ENCODE measurements at regions of chr22 and their contacts with region 1.

Region 1: DNA sequence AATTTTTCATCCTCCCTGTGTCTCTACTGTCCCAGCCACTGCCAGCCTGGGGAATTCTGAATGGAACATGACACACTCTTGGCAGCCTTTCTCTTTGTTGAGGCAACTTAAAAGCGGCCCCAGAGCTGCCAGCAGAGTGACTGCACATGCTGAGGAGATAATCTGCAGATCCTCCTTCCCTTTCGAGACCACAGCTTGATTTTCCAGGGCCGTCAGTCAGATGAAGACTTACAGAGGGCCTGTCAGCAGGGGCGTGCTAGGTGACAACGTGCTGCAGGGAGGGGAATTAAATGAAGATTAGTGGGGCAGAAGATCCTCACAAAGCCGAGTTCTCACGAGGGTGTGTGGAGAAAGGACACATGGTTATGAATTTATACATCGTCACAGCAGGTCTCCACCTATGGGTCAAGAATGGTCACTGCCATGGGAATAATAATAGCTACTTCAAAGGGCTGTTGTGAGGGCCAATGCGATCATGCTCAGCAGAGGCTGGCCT is 193.5 kb upstream of the PITPNB start:
- DNase-seq: peak; percentile 48 to 51
- ATAC-seq: peak; percentile 49 to 88 (median 74)
- H3K4me3 ChIP-seq: peak overlapping the region in 1 of 10 donors; percentile 3
- H3K27ac ChIP-seq: peak overlapping the region in 9 of 10 donors; percentile 16 to 68 (median 48)
- H3K4me1 ChIP-seq: peaks cover 0 to 34% (median 26%) of the 10 kb centered on the region in 9 donors
- H3K27me3 ChIP-seq: no peaks in the 10 kb centered on the region
- CTCF ChIP-seq: peak; percentile 6 to 57 (median 47)

Region 2: DNA sequence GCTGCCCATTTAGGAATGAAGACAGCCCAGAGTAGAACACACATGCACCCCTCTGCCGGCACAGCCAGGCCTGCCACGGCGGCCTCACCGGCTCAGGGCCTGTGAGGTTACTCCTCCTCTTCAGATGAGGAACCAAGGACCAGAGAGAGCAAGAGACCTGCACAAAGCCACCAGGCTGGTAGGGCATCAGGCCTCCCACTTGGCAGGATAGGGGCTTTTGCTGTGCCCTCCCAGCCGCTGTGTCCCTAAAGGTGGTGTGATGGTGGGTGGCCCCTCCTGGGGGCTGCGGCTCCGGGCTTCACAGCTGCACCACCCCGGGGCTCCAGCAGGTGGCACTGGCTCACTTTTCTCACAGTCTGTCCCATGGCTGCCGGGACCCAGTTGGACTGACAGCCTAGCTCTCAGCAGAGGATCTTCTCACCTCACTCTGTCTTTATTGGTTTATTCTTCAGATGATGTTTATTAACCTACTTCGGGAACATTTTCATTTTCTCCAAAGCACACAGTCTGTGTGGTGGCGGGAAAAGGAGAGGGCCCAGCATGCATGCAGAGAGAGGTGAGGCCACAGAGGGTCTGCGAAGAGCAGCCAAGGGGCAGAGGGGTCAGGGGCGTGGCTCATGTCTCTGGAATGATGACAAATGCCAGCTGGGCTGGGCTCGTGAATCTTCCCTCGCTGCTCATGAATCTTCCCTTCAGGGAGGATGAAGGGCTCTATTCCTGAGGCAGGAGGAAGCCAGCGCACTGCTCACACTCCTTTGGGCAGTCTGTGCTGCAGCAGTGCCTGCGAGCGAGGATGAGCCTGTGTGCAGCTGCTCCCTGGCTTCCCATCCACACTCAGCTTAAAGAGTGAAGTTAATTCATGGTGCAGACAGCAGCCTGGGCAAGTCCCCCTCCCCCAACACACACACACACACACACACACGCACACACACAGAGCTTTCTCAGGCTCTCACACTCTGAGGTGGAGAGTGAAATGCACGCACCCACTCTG is 92.4 kb before region 1 on chr22:
- intact Hi-C with region 1: loop called in 1 of 10 experiments (anchors 10 kb)
- DNase-seq: peak; percentile 74 to 78
- ATAC-seq: peak; percentile 69 to 83 (median 74)
- H3K4me3 ChIP-seq: no peak overlapping the region
- H3K27ac ChIP-seq: peak overlapping the region in 1 of 10 donors; percentile 1
- H3K4me1 ChIP-seq: peaks cover 6 to 58% (median 23%) of the 10 kb centered on the region in 9 donors
- H3K27me3 ChIP-seq: no peaks in the 10 kb centered on the region
- CTCF ChIP-seq: peak; percentile 85 to 98 (median 96)

Region 3: GRCh38 chr22:28051787-28052356 is 60.7 kb before region 1 on chr22:
- intact Hi-C with region 1: loop called in 1 of 10 experiments (anchors 2 kb)
- DNase-seq: peak; percentile 72 to 81
- ATAC-seq: peak in 7 of 8 donors; percentile 50 to 73 (median 71)
- H3K4me3 ChIP-seq: no peak overlapping the region
- H3K27ac ChIP-seq: no peak overlapping the region
- H3K4me1 ChIP-seq: peaks cover 0 to 31% (median 7%) of the 10 kb centered on the region in 9 donors
- H3K27me3 ChIP-seq: no peaks in the 10 kb centered on the region
- CTCF ChIP-seq: peak; percentile 77 to 95 (median 87)

Region 4: DNA sequence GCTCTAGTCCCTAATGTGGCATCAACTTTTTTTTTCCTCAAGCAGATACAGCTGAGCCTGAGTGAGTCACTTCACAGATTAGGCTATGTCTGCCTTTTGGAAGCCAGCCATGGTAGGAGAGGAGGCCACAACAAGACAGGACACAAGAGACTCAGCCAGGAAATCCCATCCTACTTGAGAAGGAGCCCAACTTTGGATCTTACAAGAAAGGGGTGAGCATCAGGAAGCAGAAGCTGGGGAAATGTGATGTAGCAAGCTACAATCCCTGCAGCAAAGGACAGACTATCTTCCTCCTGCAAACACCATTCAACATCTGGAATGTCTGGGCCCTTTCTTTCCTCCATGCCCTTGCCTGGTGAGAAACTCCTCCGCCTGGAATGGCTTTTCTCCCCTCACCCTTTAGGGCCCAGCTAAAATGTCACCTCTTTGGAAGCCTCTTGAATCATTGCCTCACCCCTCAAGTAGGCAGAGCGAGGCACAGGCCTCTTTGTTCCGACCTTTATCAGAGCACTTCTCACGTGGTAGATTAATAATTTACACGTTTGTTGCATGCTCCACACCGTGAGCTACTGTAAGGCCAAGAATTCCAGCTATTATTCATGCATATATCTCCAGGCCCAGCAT is 37.1 kb before region 1 on chr22:
- intact Hi-C with region 1: loop called in 1 of 10 experiments (anchors 5 kb)
- DNase-seq: peak in 1 of 2 donors; percentile 75
- ATAC-seq: peak; percentile 80 to 90 (median 84)
- H3K4me3 ChIP-seq: no peak overlapping the region
- H3K27ac ChIP-seq: peak overlapping the region; percentile 45 to 84 (median 72)
- H3K4me1 ChIP-seq: peaks cover 3 to 33% (median 17%) of the 10 kb centered on the region in 9 donors
- H3K27me3 ChIP-seq: no peaks in the 10 kb centered on the region
- CTCF ChIP-seq: no peak

Measured in heart right ventricle (tissue), 16 donors.